Ascending aorta (tissue), 2 donors: ENCODE measurements at regions of chr20 and their contacts with region 1.

Region 1: DNA sequence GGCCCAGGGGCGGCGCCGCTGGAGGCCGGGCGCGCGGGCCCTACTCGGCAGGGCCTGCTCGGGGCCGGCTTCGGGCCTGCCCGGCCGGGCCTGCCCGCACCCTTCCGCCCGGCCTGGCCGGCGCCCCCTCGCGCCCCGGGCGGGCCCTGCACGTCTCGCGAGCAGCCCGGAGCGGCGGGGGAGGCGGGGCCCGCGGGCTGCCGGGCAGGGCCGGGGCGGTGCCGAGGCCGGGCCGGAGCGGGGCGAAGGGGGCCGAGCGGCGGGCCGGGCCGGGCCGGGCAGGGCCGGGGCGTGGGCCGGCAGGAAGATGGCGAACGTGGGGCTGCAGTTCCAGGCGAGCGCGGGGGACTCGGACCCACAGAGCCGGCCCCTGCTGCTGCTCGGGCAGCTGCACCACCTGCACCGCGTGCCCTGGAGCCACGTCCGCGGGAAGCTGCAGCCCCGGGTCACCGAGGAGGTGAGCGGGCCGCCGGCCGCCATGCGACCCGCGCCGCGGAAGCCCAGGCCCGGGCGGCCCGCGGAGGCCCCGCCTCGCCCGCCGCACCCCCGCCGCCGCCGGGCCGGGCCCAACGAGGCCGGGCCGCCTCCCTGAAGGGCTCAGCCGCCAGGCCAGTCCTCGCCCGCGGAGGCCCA is at the start of gene NPEPL1:
- DNase-seq: peak in 1 of 2 donors; percentile 78
- H3K4me3 ChIP-seq: peak within 1 kb of the TSS; percentile 52 to 81
- H3K27ac ChIP-seq: peak within 1 kb of the TSS; percentile 90 to 96
- H3K4me1 ChIP-seq: peaks cover 12 to 22% of the 10 kb centered on the region in 2 donors
- H3K27me3 ChIP-seq: no peaks in the 10 kb centered on the region
- CTCF ChIP-seq: peak in 1 of 3 experiments; percentile 54
- total RNA-seq, gene NPEPL1: 68.3 TPM

Region 2: DNA sequence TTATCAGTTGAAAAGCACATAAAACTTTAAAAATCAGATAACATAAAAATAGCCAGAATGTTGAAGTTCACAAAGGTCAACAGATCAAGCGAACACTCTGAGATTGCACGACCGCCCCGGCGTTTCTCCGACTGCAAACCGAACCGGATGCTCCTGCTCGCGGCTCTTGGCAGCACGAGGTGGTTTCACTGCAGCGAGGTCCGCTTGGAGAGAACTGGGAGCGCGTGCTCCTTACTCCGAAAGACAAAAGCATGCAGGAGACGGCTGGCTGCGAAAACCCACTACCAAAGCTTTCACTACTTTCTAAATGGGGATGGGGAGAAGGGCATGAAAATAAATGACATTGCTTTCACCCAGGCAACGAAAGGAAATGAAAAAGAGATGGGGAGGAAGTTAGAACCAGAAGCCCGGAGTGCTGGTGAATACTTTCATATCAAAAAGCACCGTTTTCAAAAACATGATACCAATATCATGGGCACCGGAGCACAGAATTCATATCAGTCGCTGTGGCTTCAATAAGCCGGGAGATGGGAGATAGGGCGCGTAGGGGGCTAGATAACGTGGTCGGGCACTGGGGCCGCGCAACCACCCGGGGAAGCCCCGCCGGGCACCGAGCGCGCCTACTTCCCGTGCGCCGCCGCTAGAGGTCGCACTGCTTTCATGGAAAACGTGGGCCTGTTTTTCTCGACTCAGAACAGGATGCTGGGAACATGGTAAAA is 455.9 kb before region 1 on chr20:
- intact Hi-C with region 1: loop called (anchors 5 kb)
- DNase-seq: peak in 1 of 2 donors; percentile 85
- H3K4me3 ChIP-seq: peak overlapping the region; percentile 49 to 58
- H3K27ac ChIP-seq: peak overlapping the region; percentile 14 to 45
- H3K4me1 ChIP-seq: peaks cover 0 to 2% of the 10 kb centered on the region in 2 donors
- H3K27me3 ChIP-seq: no peaks in the 10 kb centered on the region
- CTCF ChIP-seq: peak; percentile 84 to 94 (median 94)

Region 3: GRCh38 chr20:58309575-58310290 is 383.0 kb before region 1 on chr20 and contains the start of gene RAB22A:
- intact Hi-C with region 1: loop called (anchors 5 kb)
- DNase-seq: peak in 1 of 2 donors; percentile 89
- H3K4me3 ChIP-seq: peak within 1 kb of the TSS; percentile 80 to 90
- H3K27ac ChIP-seq: peak within 1 kb of the TSS; percentile 78 to 82
- H3K4me1 ChIP-seq: peaks cover 0 to 6% of the 10 kb centered on the region in 2 donors
- H3K27me3 ChIP-seq: no peaks in the 10 kb centered on the region
- CTCF ChIP-seq: no peak
- total RNA-seq, gene RAB22A: 17.8 TPM

Region 4: GRCh38 chr20:58515233-58516184 is 177.2 kb before region 1 on chr20 and contains the start of gene APCDD1L:
- intact Hi-C with region 1: loop called (anchors 2 kb)
- DNase-seq: peak in 1 of 2 donors; percentile 76
- H3K4me3 ChIP-seq: peak within 1 kb of the TSS; percentile 41 to 63
- H3K27ac ChIP-seq: peak within 1 kb of the TSS; percentile 2 to 48
- H3K4me1 ChIP-seq: peaks cover 7 to 15% of the 10 kb centered on the region in 2 donors
- H3K27me3 ChIP-seq: no peaks in the 10 kb centered on the region
- CTCF ChIP-seq: no peak
- total RNA-seq, gene APCDD1L: 2.1 TPM

Region 5: DNA sequence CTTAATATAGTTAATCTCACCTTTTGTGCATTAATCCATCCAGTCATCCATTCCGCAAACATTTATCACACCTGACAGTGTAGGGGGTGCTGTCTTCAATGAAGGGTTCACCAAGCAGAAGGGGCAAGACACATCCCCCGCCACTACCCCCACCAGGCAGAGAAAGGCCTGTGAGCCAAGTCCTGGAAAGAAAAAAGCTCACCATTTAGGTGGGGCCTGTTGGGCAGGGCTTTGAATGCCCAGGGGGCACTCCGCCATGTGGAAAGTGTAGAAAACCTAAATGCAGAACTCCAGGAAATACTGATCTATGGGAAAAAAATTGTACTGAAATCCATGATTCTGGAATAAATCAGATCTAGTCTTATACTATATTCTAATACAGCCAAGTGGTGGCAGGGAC is 46.5 kb before region 1 on chr20:
- intact Hi-C with region 1: no loop called
- DNase-seq: no peak
- H3K4me3 ChIP-seq: no peak overlapping the region
- H3K27ac ChIP-seq: no peak overlapping the region
- H3K4me1 ChIP-seq: peaks cover 3 to 15% of the 10 kb centered on the region in 2 donors
- H3K27me3 ChIP-seq: no peaks in the 10 kb centered on the region
- CTCF ChIP-seq: no peak